ENCODE measurements at regions of chr1 and their contacts with region 1.

Region 1: DNA sequence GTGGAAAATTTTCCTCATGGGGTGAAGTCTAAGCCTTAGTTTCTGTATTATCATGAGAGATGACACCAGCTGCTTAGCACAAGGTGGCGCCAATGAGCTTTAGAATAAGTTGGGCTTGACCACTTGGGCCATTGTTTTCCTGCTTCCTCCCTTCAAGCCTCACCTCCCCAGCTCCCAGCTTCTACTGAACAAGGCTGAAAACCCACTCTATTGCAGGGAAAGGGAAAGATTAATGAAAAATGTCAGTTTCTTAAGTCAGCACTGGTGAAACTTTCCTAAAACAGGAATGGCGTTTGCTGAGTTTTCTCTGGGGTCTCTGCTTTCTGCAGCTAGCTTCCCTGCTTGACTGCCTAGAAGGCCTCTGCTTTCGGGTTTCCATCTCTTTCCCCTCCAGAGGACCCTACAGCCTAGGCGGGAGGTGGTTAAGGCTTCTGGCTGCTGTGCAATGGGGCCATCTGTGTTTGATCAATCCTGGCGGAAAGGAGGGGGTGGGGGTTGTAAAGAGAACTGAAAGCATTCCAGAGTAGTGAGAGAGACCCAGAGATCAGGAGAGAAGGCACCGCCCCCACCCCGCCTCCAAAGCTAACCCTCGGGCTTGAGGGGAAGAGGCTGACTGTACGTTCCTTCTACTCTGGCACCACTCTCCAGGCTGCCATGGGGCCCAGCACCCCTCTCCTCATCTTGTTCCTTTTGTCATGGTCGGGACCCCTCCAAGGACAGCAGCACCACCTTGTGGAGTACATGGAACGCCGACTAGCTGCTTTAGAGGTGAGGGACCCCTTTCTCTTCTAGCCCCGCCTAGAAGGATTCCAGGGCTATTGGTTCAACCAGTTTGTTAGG is at the start of gene OLFML3:
- DNase-seq: peak; percentile 83 to 92 (median 86)
- ATAC-seq: peak; percentile 61 to 81 (median 74)
- H3K4me3 ChIP-seq: peak within 1 kb of the TSS in 10 of 12 donors; percentile 16 to 56 (median 40)
- H3K27ac ChIP-seq: peak within 1 kb of the TSS in 11 of 12 donors; percentile 24 to 86 (median 67)
- H3K4me1 ChIP-seq: peaks cover 0 to 83% (median 28%) of the 10 kb centered on the region in 12 donors
- H3K27me3 ChIP-seq: no peaks in the 10 kb centered on the region
- CTCF ChIP-seq: peak; percentile 48 to 85 (median 73)
- POLR2A ChIP-seq: no peak
- total RNA-seq, gene OLFML3: 5.3 to 27.2 (median 13.5) TPM

Region 2: GRCh38 chr1:113835642-113836307 is 143.3 kb before region 1 on chr1:
- intact Hi-C with region 1: loop called in 1 of 10 experiments (anchors 10 kb)
- DNase-seq: no peak
- ATAC-seq: no peak
- H3K4me3 ChIP-seq: no peak overlapping the region
- H3K27ac ChIP-seq: no peak overlapping the region
- H3K4me1 ChIP-seq: peaks cover 0 to 5% (median 0%) of the 10 kb centered on the region in 12 donors
- H3K27me3 ChIP-seq: no peaks in the 10 kb centered on the region
- CTCF ChIP-seq: peak; percentile 49 to 78 (median 68)
- POLR2A ChIP-seq: no peak

Region 3: DNA sequence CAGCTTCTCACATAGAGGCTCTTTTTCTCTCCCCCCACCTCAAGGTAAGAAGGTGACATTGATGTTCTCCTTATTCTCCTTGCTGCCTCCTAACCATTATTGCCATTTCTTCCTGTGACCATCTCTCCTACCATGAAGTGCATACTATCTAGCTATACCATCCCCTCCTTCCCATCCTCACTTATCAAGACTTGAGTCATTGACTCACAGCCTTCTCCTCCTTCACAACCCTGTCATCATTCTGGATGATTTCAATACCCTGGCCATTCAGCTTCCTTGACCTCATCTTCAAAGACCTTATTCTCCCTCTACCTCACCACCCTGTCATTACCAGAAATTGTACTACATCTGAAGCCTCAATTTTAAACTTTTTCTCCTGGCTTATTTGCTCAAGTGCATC is 60.8 kb before region 1 on chr1:
- intact Hi-C with region 1: no loop called
- DNase-seq: no peak
- ATAC-seq: no peak
- H3K4me3 ChIP-seq: no peak overlapping the region
- H3K27ac ChIP-seq: no peak overlapping the region
- H3K4me1 ChIP-seq: peaks cover 0 to 4% (median 3%) of the 10 kb centered on the region in 12 donors
- H3K27me3 ChIP-seq: no peaks in the 10 kb centered on the region
- CTCF ChIP-seq: no peak
- POLR2A ChIP-seq: no peak

Region 4: DNA sequence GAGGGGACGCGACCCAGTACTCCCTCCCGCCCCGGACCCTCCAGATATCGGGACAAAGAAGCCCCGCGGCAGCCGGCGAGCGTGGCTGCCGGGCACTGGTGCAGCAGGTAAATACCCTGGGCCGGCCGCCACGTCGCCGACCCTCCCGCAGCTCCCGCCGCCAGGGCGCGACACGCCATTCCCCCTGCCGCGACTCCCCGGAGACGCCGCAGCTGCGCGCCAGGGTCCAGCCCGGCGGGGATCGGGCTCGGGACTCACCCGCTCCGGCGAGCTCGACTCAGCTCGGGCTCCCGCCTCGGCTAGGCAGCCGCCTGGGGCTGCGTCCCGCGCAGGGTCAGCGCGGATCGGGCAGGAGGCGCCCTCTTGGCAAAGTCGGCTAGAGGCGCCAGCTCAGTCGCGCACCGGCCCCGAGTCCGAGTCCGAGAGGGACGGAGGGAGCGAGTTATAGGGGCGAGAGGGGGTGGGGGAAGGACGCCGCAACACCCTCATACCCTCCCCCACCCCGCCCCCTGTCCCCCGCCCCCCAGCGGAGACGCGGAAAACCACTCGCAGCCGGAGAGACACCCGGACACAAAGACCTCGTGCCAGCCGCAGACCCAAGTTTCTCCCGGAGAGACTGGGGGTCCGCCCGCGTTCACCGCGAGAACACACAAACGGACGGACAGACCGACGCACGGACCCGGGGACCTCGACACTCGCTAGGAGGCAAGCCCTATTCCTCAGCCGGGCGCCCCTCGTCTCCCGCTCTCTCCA is 173.6 kb after region 1 on chr1:
- intact Hi-C with region 1: loop called in 1 of 10 experiments (anchors 10 kb)
- DNase-seq: peak in 4 of 5 donors; percentile 25 to 48 (median 39)
- ATAC-seq: peak in 3 of 4 donors; percentile 64 to 82 (median 69)
- H3K4me3 ChIP-seq: peak overlapping the region; percentile 3 to 59 (median 48)
- H3K27ac ChIP-seq: no peak overlapping the region
- H3K4me1 ChIP-seq: peaks cover 0 to 33% (median 22%) of the 10 kb centered on the region in 12 donors
- H3K27me3 ChIP-seq: peaks cover 41 to 98% (median 67%) of the 10 kb centered on the region in 9 donors
- CTCF ChIP-seq: no peak
- POLR2A ChIP-seq: no peak

Measured in heart left ventricle (tissue), 16 donors.